HCT116 (cell line): ENCODE measurements at regions of chr17 and their contacts with region 1.

Region 1: GRCh38 chr17:72120642-72121163 is at the start of gene SOX9:
- DNase-seq: peak; percentile 95
- ATAC-seq: peak; percentile 94
- H3K4me3 ChIP-seq: peak within 1 kb of the TSS; percentile 93 to 99
- H3K27ac ChIP-seq: peak within 1 kb of the TSS; percentile 72
- H3K4me1 ChIP-seq: peaks cover 23 to 49% of the 10 kb centered on the region in 2 experiments
- H3K27me3 ChIP-seq: no peaks in the 10 kb centered on the region
- CTCF ChIP-seq: no peak
- POLR2A ChIP-seq: peak; percentile 97
- RAD21 ChIP-seq: peak; percentile 26; the same call in 1 of the 2 replicates
- total RNA-seq, gene SOX9: 69.2 TPM

Region 2: DNA sequence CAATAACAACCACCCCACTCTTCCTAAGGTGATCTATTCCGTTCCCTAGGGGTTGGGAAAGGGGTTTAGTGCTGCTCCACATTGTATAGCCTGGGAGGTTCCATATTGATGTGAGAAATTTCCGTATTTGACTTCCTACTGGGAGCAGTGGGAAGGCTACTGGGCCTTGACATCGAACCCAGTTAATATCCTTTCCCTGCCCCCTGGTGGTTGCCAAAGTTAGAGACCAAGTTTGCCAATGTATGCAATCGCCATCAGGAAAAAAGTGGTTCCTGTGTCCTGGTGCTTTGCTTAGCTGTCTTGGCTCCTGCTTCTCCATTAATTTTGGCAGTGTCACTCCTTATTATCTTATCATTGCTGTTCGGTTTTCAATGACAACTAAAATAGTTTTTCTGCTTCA is 1036.5 kb before region 1 on chr17:
- CTCF ChIA-PET with region 1: interaction called, 4 read pairs
- POLR2A ChIA-PET with region 1: no interaction called
- RAD21 ChIA-PET with region 1: no interaction called
- intact Hi-C with region 1: loop called (anchors 10 kb)
- DNase-seq: peak; percentile 69
- ATAC-seq: peak; percentile 87
- H3K4me3 ChIP-seq: no peak overlapping the region
- H3K27ac ChIP-seq: no peak overlapping the region
- H3K4me1 ChIP-seq: peaks cover 0 to 6% of the 10 kb centered on the region in 2 experiments; a peak in 1 of 4 replicates
- H3K27me3 ChIP-seq: no peaks in the 10 kb centered on the region
- CTCF ChIP-seq: peak; percentile 69 to 78 (median 73); a peak in 5 of 6 replicates
- POLR2A ChIP-seq: no peak
- RAD21 ChIP-seq: peak; percentile 85

Region 3: DNA sequence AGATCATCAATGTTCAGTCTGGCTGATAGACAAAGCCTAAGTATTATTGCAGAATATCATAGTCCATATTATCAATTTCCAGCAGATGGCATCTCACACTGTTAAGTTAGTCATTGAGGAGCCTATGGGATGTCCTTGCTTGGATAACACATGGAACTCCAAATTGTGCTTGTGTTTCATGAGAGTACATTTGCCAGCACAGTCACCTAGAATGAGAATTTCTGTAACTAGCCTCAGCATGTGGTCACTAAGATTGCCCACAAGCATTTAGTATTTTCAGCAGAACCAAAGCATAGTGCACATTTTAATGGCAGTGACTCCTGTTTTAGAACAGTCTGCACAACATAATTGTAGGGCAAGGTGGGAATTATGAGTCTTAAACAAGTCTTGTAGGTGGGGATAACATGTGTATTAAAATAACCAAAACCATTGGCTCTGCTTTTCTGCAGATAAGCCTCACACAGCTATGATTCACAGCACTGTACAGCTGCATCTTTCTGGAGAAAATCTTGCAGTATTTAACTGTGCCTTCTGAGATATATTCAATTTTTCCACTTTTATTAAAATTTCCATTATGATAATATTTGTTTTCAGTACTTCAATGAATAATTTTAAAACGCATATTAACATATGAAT is 882.7 kb before region 1 on chr17:
- CTCF ChIA-PET with region 1: no interaction called
- POLR2A ChIA-PET with region 1: interaction called, 3 read pairs
- RAD21 ChIA-PET with region 1: no interaction called
- intact Hi-C with region 1: loop called (anchors 1 kb)
- DNase-seq: peak; percentile 57
- ATAC-seq: peak; percentile 96
- H3K4me3 ChIP-seq: no peak overlapping the region
- H3K27ac ChIP-seq: no peak overlapping the region
- H3K4me1 ChIP-seq: no peaks in the 10 kb centered on the region
- H3K27me3 ChIP-seq: no peaks in the 10 kb centered on the region
- CTCF ChIP-seq: peak; percentile 38 to 66 (median 64)
- POLR2A ChIP-seq: no peak
- RAD21 ChIP-seq: peak; percentile 89

Region 4: GRCh38 chr17:71764505-71764904 is 356.2 kb before region 1 on chr17:
- CTCF ChIA-PET with region 1: no interaction called
- POLR2A ChIA-PET with region 1: interaction called, 4 read pairs
- RAD21 ChIA-PET with region 1: no interaction called
- intact Hi-C with region 1: loop called (anchors 2 kb)
- DNase-seq: peak; percentile 62
- ATAC-seq: peak; percentile 100
- H3K4me3 ChIP-seq: no peak overlapping the region
- H3K27ac ChIP-seq: no peak overlapping the region
- H3K4me1 ChIP-seq: peaks cover 0 to 9% of the 10 kb centered on the region in 2 experiments; a peak in 2 of 4 replicates
- H3K27me3 ChIP-seq: no peaks in the 10 kb centered on the region
- CTCF ChIP-seq: peak; percentile 56 to 96 (median 92); a peak in 5 of 6 replicates
- POLR2A ChIP-seq: no peak
- RAD21 ChIP-seq: peak; percentile 81

Region 5: GRCh38 chr17:71942626-71943025 is 178.1 kb before region 1 on chr17:
- CTCF ChIA-PET with region 1: no interaction called
- POLR2A ChIA-PET with region 1: no interaction called
- RAD21 ChIA-PET with region 1: no interaction called
- intact Hi-C with region 1: no loop called
- DNase-seq: no peak
- ATAC-seq: no peak
- H3K4me3 ChIP-seq: no peak overlapping the region
- H3K27ac ChIP-seq: no peak overlapping the region
- H3K4me1 ChIP-seq: peaks cover 0 to 1% of the 10 kb centered on the region in 2 experiments; a peak in 1 of 4 replicates
- H3K27me3 ChIP-seq: no peaks in the 10 kb centered on the region
- CTCF ChIP-seq: no peak
- POLR2A ChIP-seq: no peak
- RAD21 ChIP-seq: no peak

Region 6: GRCh38 chr17:72077326-72077960 is 43.3 kb before region 1 on chr17:
- CTCF ChIA-PET with region 1: no interaction called
- POLR2A ChIA-PET with region 1: no interaction called
- RAD21 ChIA-PET with region 1: no interaction called
- intact Hi-C with region 1: no loop called
- DNase-seq: peak; percentile 8
- ATAC-seq: peak; percentile 66
- H3K4me3 ChIP-seq: no peak overlapping the region
- H3K27ac ChIP-seq: no peak overlapping the region
- H3K4me1 ChIP-seq: no peaks in the 10 kb centered on the region
- H3K27me3 ChIP-seq: no peaks in the 10 kb centered on the region
- CTCF ChIP-seq: peak; percentile 10 to 54 (median 49); a peak in 4 of 6 replicates
- POLR2A ChIP-seq: no peak
- RAD21 ChIP-seq: peak; percentile 39; the same call in 1 of the 2 replicates

Region 7: GRCh38 chr17:72430611-72431432 is 310.1 kb after region 1 on chr17:
- CTCF ChIA-PET with region 1: interaction called, 16 read pairs
- POLR2A ChIA-PET with region 1: interaction called, 11 read pairs
- RAD21 ChIA-PET with region 1: interaction called in 1 of 2 experiments, 3 read pairs
- intact Hi-C with region 1: loop called (anchors 2 kb)
- DNase-seq: peak; percentile 56
- ATAC-seq: peak; percentile 87
- H3K4me3 ChIP-seq: peak overlapping the region; percentile 21 to 22
- H3K27ac ChIP-seq: peak overlapping the region; percentile 36
- H3K4me1 ChIP-seq: peaks cover 46 to 83% of the 10 kb centered on the region in 2 experiments
- H3K27me3 ChIP-seq: no peaks in the 10 kb centered on the region
- CTCF ChIP-seq: peak; percentile 63 to 74 (median 68); a peak in 5 of 6 replicates
- POLR2A ChIP-seq: no peak
- RAD21 ChIP-seq: peak; percentile 81